Vagina (tissue), 2 donors: ENCODE measurements at regions of chr19 and their contacts with region 1.

Region 1: GRCh38 chr19:49391581-49392399 is 3.7 kb downstream of the KASH5 start:
- DNase-seq: no peak
- H3K4me3 ChIP-seq: no peak overlapping the region
- H3K27ac ChIP-seq: no peak overlapping the region
- H3K4me1 ChIP-seq: no peaks in the 10 kb centered on the region
- H3K27me3 ChIP-seq: no peaks in the 10 kb centered on the region
- CTCF ChIP-seq: peak in 2 of 3 experiments; percentile 45 to 90
- POLR2A ChIP-seq: no peak

Region 2: GRCh38 chr19:49287141-49287770 is 104.5 kb before region 1 on chr19:
- intact Hi-C with region 1: no loop called
- DNase-seq: no peak
- H3K4me3 ChIP-seq: no peak overlapping the region
- H3K27ac ChIP-seq: no peak overlapping the region
- H3K4me1 ChIP-seq: no peaks in the 10 kb centered on the region
- H3K27me3 ChIP-seq: no peaks in the 10 kb centered on the region
- CTCF ChIP-seq: no peak
- POLR2A ChIP-seq: no peak

Region 3: DNA sequence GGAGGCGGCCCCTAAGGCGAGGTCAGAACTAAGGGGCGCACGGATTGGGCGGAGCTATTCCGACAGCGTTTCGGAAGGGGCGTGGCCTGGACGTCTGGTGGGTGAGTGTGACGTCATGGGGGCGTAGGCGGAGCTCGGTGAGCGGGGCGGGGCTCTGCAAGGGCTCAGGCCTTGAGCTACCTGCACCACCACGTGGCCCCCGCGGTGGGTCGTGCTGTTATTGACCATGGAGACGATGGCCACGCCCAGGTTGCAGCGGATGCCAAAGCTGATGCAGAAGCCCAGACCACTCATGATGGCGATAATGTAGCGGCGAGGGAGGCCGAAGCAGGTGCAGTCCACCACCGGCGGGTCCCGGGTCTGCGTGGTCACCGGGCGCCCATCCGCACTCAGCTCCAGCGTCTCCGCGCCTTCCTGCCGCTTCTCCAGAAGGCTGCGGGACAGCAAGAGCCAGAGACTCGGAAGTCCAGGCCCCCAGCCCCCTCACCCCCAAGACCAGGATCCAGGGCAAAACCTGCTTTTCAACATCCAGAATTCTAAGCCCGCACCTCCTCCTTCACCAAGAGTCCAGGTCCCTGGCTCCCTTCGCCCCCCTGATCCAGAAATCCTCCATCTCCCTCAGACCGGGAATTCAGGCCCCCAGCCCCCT is 44.7 kb after region 1 on chr19:
- intact Hi-C with region 1: loop called (anchors 5 kb)
- DNase-seq: no peak
- H3K4me3 ChIP-seq: no peak overlapping the region
- H3K27ac ChIP-seq: no peak overlapping the region
- H3K4me1 ChIP-seq: peaks cover 10% of the 10 kb centered on the region
- H3K27me3 ChIP-seq: peaks cover 7% of the 10 kb centered on the region
- CTCF ChIP-seq: no peak
- POLR2A ChIP-seq: no peak